ENCODE measurements at regions of chr5 and their contacts with region 1.

Region 1: GRCh38 chr5:175534070-175534932 is 55.9 kb downstream of the SFXN1 start:
- DNase-seq: peak; percentile 79 to 84 (median 84)
- ATAC-seq: peak; percentile 100
- H3K4me3 ChIP-seq: no peak overlapping the region
- H3K4me1 ChIP-seq: no peaks in the 10 kb centered on the region
- CTCF ChIP-seq: peak; percentile 91

Region 2: GRCh38 chr5:175347027-175347426 is 187.3 kb before region 1 on chr5:
- intact Hi-C with region 1: no loop called
- DNase-seq: no peak
- ATAC-seq: no peak
- H3K4me3 ChIP-seq: no peak overlapping the region
- H3K4me1 ChIP-seq: no peaks in the 10 kb centered on the region
- CTCF ChIP-seq: no peak

Region 3: DNA sequence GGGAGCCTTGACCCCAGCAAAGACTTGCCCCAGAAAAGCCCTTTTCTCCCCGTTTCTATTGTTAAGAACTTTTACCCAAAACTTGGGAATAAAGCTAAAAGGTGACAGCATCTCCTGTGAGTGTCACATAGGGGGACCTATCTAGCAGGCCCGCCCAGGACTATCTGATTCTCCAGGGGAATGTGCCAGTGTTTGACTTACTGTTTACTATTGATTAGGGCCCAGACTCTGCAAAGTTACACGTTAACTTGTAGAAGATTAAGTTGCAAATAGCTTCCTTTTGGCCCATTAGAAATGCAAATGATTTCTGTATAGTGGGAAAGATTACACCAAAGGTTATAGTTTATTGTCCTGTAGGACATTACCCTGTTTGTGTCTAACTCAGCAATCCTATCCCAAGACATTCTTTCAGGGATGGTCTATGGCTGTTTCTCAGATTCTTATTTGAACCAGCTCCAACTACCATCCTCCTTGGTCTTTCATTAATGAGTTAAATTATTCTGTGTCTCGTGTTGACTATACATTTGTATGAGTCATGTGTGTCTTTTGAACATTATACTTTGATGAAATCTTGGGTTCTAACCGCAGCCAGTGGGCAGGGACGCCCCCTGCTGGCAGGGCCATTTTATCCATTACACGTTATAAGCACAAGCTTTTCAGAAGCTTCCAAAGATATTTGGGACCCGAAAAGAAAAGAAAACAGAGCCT is 184.3 kb after region 1 on chr5:
- intact Hi-C with region 1: loop called in 1 of 2 experiments (anchors 10 kb)
- DNase-seq: peak in 2 of 3 donors; percentile 53 to 83
- ATAC-seq: peak; percentile 39
- H3K4me3 ChIP-seq: no peak overlapping the region
- H3K4me1 ChIP-seq: no peaks in the 10 kb centered on the region
- CTCF ChIP-seq: peak; percentile 30